Naive thymus-derived CD4-positive, alpha-beta T cell (primary cell): ENCODE measurements at regions of chr10 and their contacts with region 1.

Region 1: GRCh38 chr10:80205478-80206276 is at the start of gene ANXA11:
- DNase-seq: peak; percentile 76 to 85 (median 81)
- ATAC-seq: peak; percentile 91
- H3K4me3 ChIP-seq: peak within 1 kb of the TSS; percentile 90
- H3K4me3 Mint-ChIP-seq: peak within 1 kb of the TSS; percentile 83 to 93 (median 88)
- H3K27ac ChIP-seq: peak within 1 kb of the TSS; percentile 94
- H3K27ac Mint-ChIP-seq: peak within 1 kb of the TSS; percentile 89 to 98 (median 96)
- H3K4me1 ChIP-seq: peaks cover 34 to 36% of the 10 kb centered on the region in 2 donors
- H3K4me1 Mint-ChIP-seq: peaks cover 41 to 69% (median 48%) of the 10 kb centered on the region in 7 donors
- H3K27me3 ChIP-seq: no peaks in the 10 kb centered on the region
- H3K27me3 Mint-ChIP-seq: no peaks in the 10 kb centered on the region
- total RNA-seq, gene ANXA11: 189 to 247 (median 231) TPM

Region 2: DNA sequence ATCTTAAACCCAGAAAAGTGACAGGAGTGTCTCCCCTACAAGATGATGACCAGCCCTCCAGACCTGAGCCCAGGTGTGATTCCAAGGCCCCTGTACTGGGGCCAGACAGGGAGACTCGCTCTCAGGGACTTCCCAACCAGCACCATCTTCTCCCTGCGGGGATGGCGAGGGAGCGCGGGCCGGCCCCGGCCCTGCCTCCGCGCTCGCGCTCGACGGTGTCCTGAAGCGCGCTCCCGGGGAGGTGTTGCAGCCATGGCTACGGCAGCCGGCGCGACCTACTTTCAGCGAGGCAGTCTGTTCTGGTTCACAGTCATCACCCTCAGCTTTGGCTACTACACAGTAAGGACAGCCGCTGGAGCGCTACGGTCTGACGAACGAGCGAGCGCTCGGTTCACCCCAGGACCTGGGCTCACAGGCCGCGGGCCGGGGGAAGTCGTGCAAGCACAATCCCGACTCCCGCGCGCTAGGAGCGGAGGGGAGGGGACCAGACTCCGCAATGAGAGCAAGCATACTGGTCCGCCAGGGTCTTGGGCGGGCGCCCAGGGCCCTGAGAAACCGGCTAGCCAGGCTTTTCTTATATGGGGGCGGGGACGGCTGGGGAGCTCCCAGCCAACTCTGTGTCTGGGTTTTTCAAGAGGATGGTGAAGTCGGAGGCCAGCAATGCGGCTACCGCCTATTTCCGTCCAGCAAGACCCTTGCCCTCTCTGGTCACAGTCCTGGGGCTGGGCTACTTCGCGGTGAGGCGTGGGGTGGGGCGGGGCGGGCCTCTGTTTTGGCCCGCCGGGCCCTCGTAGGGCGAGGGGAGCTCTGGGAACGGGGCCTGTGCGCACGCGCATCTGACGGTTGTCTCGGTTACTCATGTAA is 127.0 kb before region 1 on chr10 and contains the start of gene TMEM254:
- CTCF ChIA-PET with region 1: no interaction called
- POLR2A ChIA-PET with region 1: interaction called, 5 read pairs
- intact Hi-C with region 1: loop called (anchors 1 kb)
- DNase-seq: peak; percentile 79 to 87 (median 85)
- ATAC-seq: peak; percentile 87
- H3K4me3 ChIP-seq: peak within 1 kb of the TSS; percentile 88
- H3K4me3 Mint-ChIP-seq: peak within 1 kb of the TSS; percentile 90 to 100 (median 96)
- H3K27ac ChIP-seq: peak within 1 kb of the TSS; percentile 87
- H3K27ac Mint-ChIP-seq: peak within 1 kb of the TSS; percentile 88 to 99 (median 95)
- H3K4me1 ChIP-seq: peaks cover 6 to 12% of the 10 kb centered on the region in 2 donors
- H3K4me1 Mint-ChIP-seq: peaks cover 14 to 25% (median 20%) of the 10 kb centered on the region in 7 donors
- H3K27me3 ChIP-seq: no peaks in the 10 kb centered on the region
- H3K27me3 Mint-ChIP-seq: no peaks in the 10 kb centered on the region
- total RNA-seq, gene TMEM254: 7.3 to 19.6 (median 17.1) TPM

Region 3: GRCh38 chr10:80168679-80169380 is 36.8 kb before region 1 on chr10:
- CTCF ChIA-PET with region 1: interaction called, 3 read pairs
- POLR2A ChIA-PET with region 1: interaction called, 3 read pairs
- intact Hi-C with region 1: loop called in 1 of 2 experiments (anchors 5 kb)
- DNase-seq: no peak
- ATAC-seq: no peak
- H3K4me3 ChIP-seq: no peak overlapping the region
- H3K4me3 Mint-ChIP-seq: no peak overlapping the region
- H3K27ac ChIP-seq: no peak overlapping the region
- H3K27ac Mint-ChIP-seq: peak overlapping the region in 1 of 9 donors; percentile 4
- H3K4me1 ChIP-seq: peaks cover 0 to 4% of the 10 kb centered on the region in 2 donors
- H3K4me1 Mint-ChIP-seq: peaks cover 8 to 25% (median 18%) of the 10 kb centered on the region in 7 donors
- H3K27me3 ChIP-seq: no peaks in the 10 kb centered on the region
- H3K27me3 Mint-ChIP-seq: no peaks in the 10 kb centered on the region

Region 4: GRCh38 chr10:80453701-80454513 is 248.2 kb after region 1 on chr10 and contains the start of gene TSPAN14:
- CTCF ChIA-PET with region 1: no interaction called
- POLR2A ChIA-PET with region 1: no interaction called
- intact Hi-C with region 1: loop called (anchors 5 kb)
- DNase-seq: peak; percentile 49 to 83 (median 63)
- ATAC-seq: peak; percentile 84
- H3K4me3 ChIP-seq: peak within 1 kb of the TSS; percentile 87
- H3K4me3 Mint-ChIP-seq: peak within 1 kb of the TSS; percentile 79 to 99 (median 98)
- H3K27ac ChIP-seq: peak within 1 kb of the TSS; percentile 84
- H3K27ac Mint-ChIP-seq: peak within 1 kb of the TSS; percentile 87 to 99 (median 98)
- H3K4me1 ChIP-seq: peaks cover 23 to 27% of the 10 kb centered on the region in 2 donors
- H3K4me1 Mint-ChIP-seq: peaks cover 26 to 43% (median 38%) of the 10 kb centered on the region in 7 donors
- H3K27me3 ChIP-seq: no peaks in the 10 kb centered on the region
- H3K27me3 Mint-ChIP-seq: no peaks in the 10 kb centered on the region
- total RNA-seq, gene TSPAN14: 135 to 165 (median 160) TPM

Region 5: DNA sequence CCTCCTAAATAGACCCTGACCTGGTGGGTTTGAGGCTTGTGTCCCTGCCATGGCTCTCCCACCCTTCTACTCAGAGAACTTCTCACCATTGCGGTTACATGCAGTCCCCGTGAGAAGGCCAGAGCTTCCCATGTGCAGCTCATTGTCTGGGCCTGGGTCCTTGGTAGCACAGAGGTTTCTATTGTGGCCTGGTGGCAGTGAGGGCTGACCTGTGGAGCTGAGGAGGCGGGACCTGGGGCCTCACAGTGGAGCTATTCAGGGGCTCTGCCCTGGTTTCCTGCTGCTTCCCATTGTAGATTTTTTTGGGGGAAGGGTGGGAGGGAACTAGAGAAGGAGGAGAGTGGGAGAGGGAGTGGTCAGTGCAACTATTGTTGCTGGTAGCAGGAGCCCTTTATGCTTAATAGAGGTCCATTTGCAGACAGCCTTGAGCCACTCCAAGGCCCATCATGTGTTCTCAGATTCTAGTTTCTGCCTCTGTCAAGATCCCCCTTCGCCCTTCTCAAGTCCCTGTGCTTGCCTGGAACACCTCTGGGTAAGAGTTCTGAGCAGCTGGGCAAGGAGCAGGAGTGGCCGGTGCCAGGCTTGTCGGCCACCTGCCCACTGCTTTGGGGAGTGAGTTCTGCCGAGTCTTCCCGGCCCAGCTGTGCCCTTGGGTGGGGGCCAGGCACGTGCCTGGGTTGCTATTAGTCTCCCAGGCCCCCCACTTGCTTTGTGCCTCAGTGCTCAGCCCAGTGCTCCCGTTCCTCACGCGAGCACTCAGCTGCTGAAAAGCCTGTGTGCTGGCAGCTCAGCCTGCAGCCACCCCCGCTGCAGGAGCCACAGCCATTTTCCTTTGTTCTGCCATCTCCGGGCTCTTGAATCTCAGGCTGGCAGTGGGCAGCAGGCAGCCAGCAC is 259.1 kb after region 1 on chr10:
- CTCF ChIA-PET with region 1: no interaction called
- POLR2A ChIA-PET with region 1: no interaction called
- intact Hi-C with region 1: loop called in 1 of 2 experiments (anchors 5 kb)
- DNase-seq: peak in 2 of 9 donors; percentile 46 to 47
- ATAC-seq: peak; percentile 11
- H3K4me3 ChIP-seq: peak overlapping the region; percentile 57
- H3K4me3 Mint-ChIP-seq: peak overlapping the region; percentile 79 to 99 (median 88)
- H3K27ac ChIP-seq: peak overlapping the region; percentile 84
- H3K27ac Mint-ChIP-seq: peak overlapping the region; percentile 87 to 99 (median 98)
- H3K4me1 ChIP-seq: peaks cover 88 to 97% of the 10 kb centered on the region in 2 donors
- H3K4me1 Mint-ChIP-seq: peaks cover 75 to 100% (median 95%) of the 10 kb centered on the region in 7 donors
- H3K27me3 ChIP-seq: no peaks in the 10 kb centered on the region
- H3K27me3 Mint-ChIP-seq: no peaks in the 10 kb centered on the region